Activated naive CD4-positive, alpha-beta T cell treated with anti-CD3 and anti-CD28 coated beads for 36 hours (primary cell): ENCODE measurements at regions of chr17 and their contacts with region 1.

Region 1: DNA sequence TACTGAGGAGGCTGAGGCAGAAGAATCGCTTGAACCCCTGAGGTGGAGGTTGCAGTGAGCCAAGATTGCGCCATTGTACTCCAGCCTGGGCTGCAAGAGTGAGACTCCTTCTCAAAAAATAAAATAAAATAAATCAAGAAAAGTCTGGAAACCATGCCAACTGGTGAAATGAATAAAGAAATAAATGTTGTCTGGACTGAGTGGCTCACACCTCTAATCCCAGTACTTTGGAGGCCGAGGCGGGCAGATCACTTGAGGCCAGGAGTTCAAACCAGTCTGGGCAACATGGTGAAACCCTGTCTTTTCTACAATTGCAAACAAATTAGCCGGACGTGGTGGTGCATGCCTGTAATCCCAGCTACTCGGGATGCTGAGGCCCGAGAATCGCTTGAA is 744 bp upstream of the LRRC37A3 start:
- DNase-seq: no peak
- H3K4me3 Mint-ChIP-seq: peak overlapping the region; percentile 83
- H3K27ac Mint-ChIP-seq: peak overlapping the region; percentile 70
- H3K4me1 Mint-ChIP-seq: peaks cover 10% of the 10 kb centered on the region
- H3K27me3 Mint-ChIP-seq: no peaks in the 10 kb centered on the region

Region 2: DNA sequence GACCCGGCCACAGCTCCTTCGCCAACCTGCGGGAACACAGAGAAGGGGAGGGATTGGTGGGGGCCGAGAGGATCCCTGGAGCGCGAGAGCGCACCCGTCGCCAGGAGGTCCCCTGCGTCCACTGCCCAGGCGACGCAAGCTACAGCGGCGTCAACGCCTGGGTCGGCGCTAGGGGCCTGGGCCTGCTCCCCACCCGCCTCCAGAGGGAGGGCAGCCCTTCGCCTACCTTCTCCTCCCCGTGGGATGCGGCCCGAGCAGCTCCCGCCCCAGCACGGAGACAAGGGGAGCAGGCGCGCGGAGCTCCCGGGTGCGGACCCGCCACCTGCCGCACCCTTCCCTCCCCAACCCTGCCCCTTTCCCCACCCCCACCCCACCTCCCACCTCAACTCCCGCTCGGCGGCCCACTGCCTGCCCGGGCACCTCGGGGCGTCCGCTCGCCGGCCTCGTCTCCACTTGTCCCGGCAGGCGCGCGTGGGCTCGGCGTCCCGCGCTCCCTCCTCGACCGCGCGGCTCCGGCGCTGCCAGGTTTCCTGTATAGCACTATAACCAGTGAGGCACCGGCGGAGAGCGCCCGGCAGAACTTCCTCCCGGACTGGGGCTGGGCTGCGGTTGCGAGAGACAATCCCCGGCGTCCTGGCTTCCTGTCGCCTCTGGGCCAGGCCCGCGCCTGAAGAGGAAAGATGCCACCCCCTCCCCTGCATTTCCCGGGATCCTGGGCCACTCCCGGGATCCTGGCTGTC is 138.8 kb before region 1 on chr17:
- CTCF ChIA-PET with region 1: no interaction called
- intact Hi-C with region 1: loop called (anchors 2 kb)
- DNase-seq: peak; percentile 78
- H3K4me3 Mint-ChIP-seq: peak overlapping the region; percentile 70
- H3K27ac Mint-ChIP-seq: no peak overlapping the region
- H3K4me1 Mint-ChIP-seq: peaks cover 41% of the 10 kb centered on the region
- H3K27me3 Mint-ChIP-seq: peaks cover 9% of the 10 kb centered on the region

Region 3: GRCh38 chr17:64938925-64939474 is 19.0 kb after region 1 on chr17:
- CTCF ChIA-PET with region 1: interaction called, 17 read pairs
- intact Hi-C with region 1: no loop called
- DNase-seq: peak; percentile 67
- H3K4me3 Mint-ChIP-seq: no peak overlapping the region
- H3K27ac Mint-ChIP-seq: no peak overlapping the region
- H3K4me1 Mint-ChIP-seq: no peaks in the 10 kb centered on the region
- H3K27me3 Mint-ChIP-seq: no peaks in the 10 kb centered on the region

Region 4: GRCh38 chr17:64968652-64969501 is 48.9 kb after region 1 on chr17:
- CTCF ChIA-PET with region 1: no interaction called
- intact Hi-C with region 1: loop called (anchors 5 kb)
- DNase-seq: peak; percentile 34
- H3K4me3 Mint-ChIP-seq: no peak overlapping the region
- H3K27ac Mint-ChIP-seq: peak overlapping the region; percentile 75
- H3K4me1 Mint-ChIP-seq: peaks cover 69% of the 10 kb centered on the region
- H3K27me3 Mint-ChIP-seq: no peaks in the 10 kb centered on the region